Activated CD4-positive, alpha-beta T cell treated with anti-CD3 and anti-CD28 coated beads for 36 hours (primary cell): ENCODE measurements at regions of chr6 and their contacts with region 1.

Region 1: GRCh38 chr6:31403283-31403989 is at the start of gene MICA:
- DNase-seq: peak; percentile 83
- ATAC-seq: peak; percentile 68
- H3K4me3 Mint-ChIP-seq: peak within 1 kb of the TSS; percentile 71
- H3K27ac Mint-ChIP-seq: peak within 1 kb of the TSS; percentile 71
- H3K4me1 Mint-ChIP-seq: peaks cover 62% of the 10 kb centered on the region
- H3K27me3 Mint-ChIP-seq: no peaks in the 10 kb centered on the region
- total RNA-seq, gene MICA: 6.3 to 7.1 TPM

Region 2: GRCh38 chr6:31356946-31357466 is 46.4 kb before region 1 on chr6 and contains the start of gene HLA-B:
- CTCF ChIA-PET with region 1: no interaction called
- POLR2A ChIA-PET with region 1: no interaction called
- intact Hi-C with region 1: loop called (anchors 1 to 5 kb)
- DNase-seq: peak; percentile 91
- ATAC-seq: peak; percentile 80
- H3K4me3 Mint-ChIP-seq: peak within 1 kb of the TSS; percentile 98
- H3K27ac Mint-ChIP-seq: peak within 1 kb of the TSS; percentile 99
- H3K4me1 Mint-ChIP-seq: peaks cover 56% of the 10 kb centered on the region
- H3K27me3 Mint-ChIP-seq: peaks cover 5% of the 10 kb centered on the region
- total RNA-seq, gene HLA-B: 2,101 to 2,412 TPM

Region 3: GRCh38 chr6:31386977-31387376 is 16.5 kb before region 1 on chr6:
- CTCF ChIA-PET with region 1: no interaction called
- POLR2A ChIA-PET with region 1: no interaction called
- intact Hi-C with region 1: no loop called
- DNase-seq: no peak
- ATAC-seq: no peak
- H3K4me3 Mint-ChIP-seq: no peak overlapping the region
- H3K27ac Mint-ChIP-seq: no peak overlapping the region
- H3K4me1 Mint-ChIP-seq: peaks cover 3% of the 10 kb centered on the region
- H3K27me3 Mint-ChIP-seq: no peaks in the 10 kb centered on the region

Region 4: GRCh38 chr6:31441365-31442267 is 38.2 kb after region 1 on chr6:
- CTCF ChIA-PET with region 1: interaction called, 68 read pairs
- POLR2A ChIA-PET with region 1: interaction called, 3 read pairs
- intact Hi-C with region 1: no loop called
- DNase-seq: peak; percentile 90
- ATAC-seq: peak; percentile 93
- H3K4me3 Mint-ChIP-seq: no peak overlapping the region
- H3K27ac Mint-ChIP-seq: no peak overlapping the region
- H3K4me1 Mint-ChIP-seq: peaks cover 5% of the 10 kb centered on the region
- H3K27me3 Mint-ChIP-seq: peaks cover 30% of the 10 kb centered on the region

Region 5: GRCh38 chr6:31462964-31463870 is 59.8 kb after region 1 on chr6:
- CTCF ChIA-PET with region 1: interaction called, 4 read pairs
- POLR2A ChIA-PET with region 1: no interaction called
- intact Hi-C with region 1: loop called in 1 of 2 experiments (anchors 1 kb)
- DNase-seq: peak; percentile 91
- ATAC-seq: peak; percentile 95
- H3K4me3 Mint-ChIP-seq: peak overlapping the region; percentile 100
- H3K27ac Mint-ChIP-seq: peak overlapping the region; percentile 97
- H3K4me1 Mint-ChIP-seq: peaks cover 53% of the 10 kb centered on the region
- H3K27me3 Mint-ChIP-seq: peaks cover 2% of the 10 kb centered on the region

Region 6: DNA sequence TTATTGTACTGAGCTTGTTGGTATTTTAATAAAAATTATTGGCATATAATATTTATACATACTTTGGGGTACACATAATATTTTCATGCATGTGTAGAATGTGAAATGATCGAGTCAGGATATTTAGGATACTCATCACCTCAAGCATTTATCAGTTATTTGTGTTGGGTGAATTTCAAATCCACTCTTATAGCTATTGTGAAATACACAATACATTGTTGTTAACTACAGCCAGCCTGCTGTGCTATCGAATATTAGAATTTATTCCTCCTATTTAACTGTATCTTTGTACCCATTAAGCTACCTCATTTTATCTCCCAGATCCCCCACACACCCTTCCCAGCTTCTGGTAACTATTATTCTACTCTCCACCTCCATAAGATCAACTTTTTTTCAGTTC is 80.0 kb after region 1 on chr6:
- CTCF ChIA-PET with region 1: no interaction called
- POLR2A ChIA-PET with region 1: no interaction called
- intact Hi-C with region 1: no loop called
- DNase-seq: no peak
- ATAC-seq: no peak
- H3K4me3 Mint-ChIP-seq: no peak overlapping the region
- H3K27ac Mint-ChIP-seq: no peak overlapping the region
- H3K4me1 Mint-ChIP-seq: peaks cover 1% of the 10 kb centered on the region
- H3K27me3 Mint-ChIP-seq: no peaks in the 10 kb centered on the region

Region 7: DNA sequence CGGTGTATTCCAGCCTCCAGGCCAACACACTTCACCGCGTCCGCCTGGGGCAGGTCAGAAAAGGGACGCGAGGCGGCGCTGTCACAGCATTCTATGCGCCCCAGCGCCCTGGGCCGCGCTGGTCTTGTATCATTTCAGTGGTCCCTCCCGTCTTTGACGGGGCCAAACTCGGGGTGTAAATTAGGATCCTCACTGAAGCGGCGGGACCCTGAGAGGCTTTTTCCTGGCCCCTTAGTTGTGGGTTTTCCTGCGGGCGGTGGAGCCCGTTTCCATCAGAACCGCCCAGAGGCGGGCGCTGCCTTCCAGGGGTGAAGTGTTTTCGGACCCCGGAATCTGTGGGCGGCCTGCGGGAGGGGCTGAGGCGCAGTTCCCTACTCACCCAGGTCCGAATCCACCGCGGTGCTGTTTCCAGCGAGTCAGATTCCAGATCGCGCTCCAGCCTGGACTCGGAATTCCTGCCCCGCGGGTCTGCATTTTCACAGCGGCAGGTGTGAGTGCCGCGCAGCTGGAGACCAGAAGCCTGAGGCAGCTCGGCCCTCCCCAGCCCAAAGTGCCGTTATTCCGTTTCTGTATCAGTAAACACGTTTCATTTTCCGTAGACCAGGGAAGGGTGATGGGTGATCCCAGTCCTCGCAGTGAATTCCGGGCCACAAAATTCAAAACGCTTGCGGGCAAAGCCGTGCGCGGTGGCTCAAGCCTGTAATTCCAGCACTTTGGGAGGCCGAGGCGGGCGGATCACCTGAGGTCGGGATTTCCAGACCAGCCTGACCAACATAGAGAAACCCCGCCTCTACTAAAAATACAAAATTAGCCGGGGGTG is 90.6 kb after region 1 on chr6:
- CTCF ChIA-PET with region 1: interaction called, 7 read pairs
- POLR2A ChIA-PET with region 1: interaction called, 8 read pairs
- intact Hi-C with region 1: loop called (anchors 2 to 5 kb)
- DNase-seq: peak; percentile 91
- ATAC-seq: peak; percentile 58
- H3K4me3 Mint-ChIP-seq: peak overlapping the region; percentile 79
- H3K27ac Mint-ChIP-seq: peak overlapping the region; percentile 90
- H3K4me1 Mint-ChIP-seq: peaks cover 43% of the 10 kb centered on the region
- H3K27me3 Mint-ChIP-seq: no peaks in the 10 kb centered on the region